CD4-positive, alpha-beta T cell (primary cell): ENCODE measurements at regions of chr6 and their contacts with region 1.

Region 1: DNA sequence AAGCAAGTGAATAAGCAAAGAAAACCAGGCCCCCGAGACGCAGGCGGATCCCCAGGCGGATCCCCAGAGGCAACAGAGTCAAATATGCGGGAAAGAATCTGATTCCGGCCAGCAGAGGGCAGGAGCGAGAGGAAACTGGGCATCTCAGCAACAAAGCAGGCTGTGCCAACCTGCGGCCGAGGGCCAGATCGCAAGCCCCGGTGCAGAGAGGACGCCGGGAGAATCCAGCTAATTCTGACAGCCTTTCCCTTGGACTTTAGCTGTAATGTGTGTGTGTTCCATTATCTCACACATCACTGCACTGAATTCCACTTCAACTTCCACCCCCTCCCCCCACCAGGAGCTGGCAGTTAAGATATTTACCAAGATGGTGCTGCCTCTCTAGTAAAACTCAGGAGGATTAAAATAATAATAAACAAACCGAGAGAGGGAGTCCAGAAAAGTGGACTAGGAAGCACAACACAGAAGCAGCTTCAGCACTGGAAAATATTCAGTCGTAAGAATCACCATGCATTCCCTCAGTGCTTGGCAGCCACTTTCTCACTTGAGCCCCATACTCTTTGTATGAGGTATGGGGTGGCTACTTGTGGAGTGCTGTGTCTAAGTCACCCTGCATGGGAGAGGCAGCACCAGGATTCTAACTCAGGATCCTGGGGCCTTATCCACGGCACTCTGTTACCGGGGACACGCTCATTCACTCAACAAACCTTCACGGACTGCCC is 66.2 kb upstream of the SNX9 start:
- DNase-seq: peak; percentile 68 to 90 (median 76)
- ATAC-seq: peak; percentile 31
- H3K4me3 ChIP-seq: no peak overlapping the region
- H3K4me3 Mint-ChIP-seq: peak overlapping the region; percentile 26
- H3K27ac ChIP-seq: no peak overlapping the region
- H3K27ac Mint-ChIP-seq: peak overlapping the region; percentile 87
- H3K4me1 ChIP-seq: peaks cover 49% of the 10 kb centered on the region
- H3K4me1 Mint-ChIP-seq: peaks cover 71% of the 10 kb centered on the region
- H3K27me3 ChIP-seq: no peaks in the 10 kb centered on the region
- H3K27me3 Mint-ChIP-seq: no peaks in the 10 kb centered on the region
- CTCF ChIP-seq: peak; percentile 92

Region 2: GRCh38 chr6:157774153-157775135 is 17.6 kb after region 1 on chr6:
- CTCF ChIA-PET with region 1: interaction called, 16 read pairs
- POLR2A ChIA-PET with region 1: interaction called, 3 read pairs
- intact Hi-C with region 1: no loop called
- DNase-seq: peak in 3 of 14 experiments; percentile 31 to 49 (median 42)
- ATAC-seq: no peak
- H3K4me3 ChIP-seq: no peak overlapping the region
- H3K4me3 Mint-ChIP-seq: peak overlapping the region; percentile 15
- H3K27ac ChIP-seq: no peak overlapping the region
- H3K27ac Mint-ChIP-seq: no peak overlapping the region
- H3K4me1 ChIP-seq: peaks cover 7% of the 10 kb centered on the region
- H3K4me1 Mint-ChIP-seq: peaks cover 13% of the 10 kb centered on the region
- H3K27me3 ChIP-seq: no peaks in the 10 kb centered on the region
- H3K27me3 Mint-ChIP-seq: no peaks in the 10 kb centered on the region
- CTCF ChIP-seq: no peak

Region 3: GRCh38 chr6:157873735-157874344 is 117.0 kb after region 1 on chr6:
- CTCF ChIA-PET with region 1: interaction called, 22 read pairs
- POLR2A ChIA-PET with region 1: interaction called, 23 read pairs
- intact Hi-C with region 1: loop called (anchors 1 kb)
- DNase-seq: peak; percentile 75 to 92 (median 84)
- ATAC-seq: peak; percentile 74
- H3K4me3 ChIP-seq: no peak overlapping the region
- H3K4me3 Mint-ChIP-seq: no peak overlapping the region
- H3K27ac ChIP-seq: no peak overlapping the region
- H3K27ac Mint-ChIP-seq: peak overlapping the region; percentile 47
- H3K4me1 ChIP-seq: peaks cover 15% of the 10 kb centered on the region
- H3K4me1 Mint-ChIP-seq: peaks cover 39% of the 10 kb centered on the region
- H3K27me3 ChIP-seq: no peaks in the 10 kb centered on the region
- H3K27me3 Mint-ChIP-seq: no peaks in the 10 kb centered on the region
- CTCF ChIP-seq: peak; percentile 92

Region 4: DNA sequence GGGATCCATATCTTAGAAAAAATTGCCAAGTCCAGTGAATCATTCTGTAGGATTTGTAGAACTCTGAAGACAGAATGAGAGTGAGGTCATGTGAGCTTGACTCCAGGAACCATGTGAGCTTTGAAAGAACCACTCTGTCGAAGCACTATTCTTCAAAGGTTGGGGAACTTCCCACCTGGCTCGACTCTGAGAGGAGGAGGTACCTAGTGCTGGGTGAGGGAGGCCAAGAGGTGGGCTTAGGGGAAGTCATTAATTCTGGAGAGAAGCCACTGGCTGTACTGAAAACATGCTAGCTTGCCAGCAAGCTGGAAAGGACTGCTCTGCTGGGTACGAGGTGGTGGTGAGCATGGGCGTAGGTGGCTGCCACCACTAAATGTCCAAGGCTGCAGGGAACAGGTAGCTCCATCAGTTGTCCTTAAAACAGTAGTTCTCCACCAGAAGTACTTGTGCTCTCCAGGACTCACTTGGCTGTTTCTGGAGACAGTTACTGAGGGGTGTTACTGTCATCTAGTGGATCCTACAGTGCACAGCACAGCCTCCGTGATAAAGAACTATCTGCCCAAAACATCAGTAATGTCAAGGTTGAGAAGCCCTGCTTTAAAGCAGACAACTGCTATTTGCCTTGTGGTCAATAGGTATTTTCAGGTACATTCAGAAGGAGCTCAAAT is 190.1 kb after region 1 on chr6:
- CTCF ChIA-PET with region 1: no interaction called
- POLR2A ChIA-PET with region 1: no interaction called
- intact Hi-C with region 1: loop called in 1 of 2 experiments (anchors 5 kb)
- DNase-seq: peak in 3 of 14 experiments; percentile 21 to 57 (median 54)
- ATAC-seq: peak; percentile 80
- H3K4me3 ChIP-seq: no peak overlapping the region
- H3K4me3 Mint-ChIP-seq: no peak overlapping the region
- H3K27ac ChIP-seq: no peak overlapping the region
- H3K27ac Mint-ChIP-seq: peak overlapping the region; percentile 21
- H3K4me1 ChIP-seq: no peaks in the 10 kb centered on the region
- H3K4me1 Mint-ChIP-seq: peaks cover 4% of the 10 kb centered on the region
- H3K27me3 ChIP-seq: no peaks in the 10 kb centered on the region
- H3K27me3 Mint-ChIP-seq: no peaks in the 10 kb centered on the region
- CTCF ChIP-seq: peak; percentile 36

Region 5: DNA sequence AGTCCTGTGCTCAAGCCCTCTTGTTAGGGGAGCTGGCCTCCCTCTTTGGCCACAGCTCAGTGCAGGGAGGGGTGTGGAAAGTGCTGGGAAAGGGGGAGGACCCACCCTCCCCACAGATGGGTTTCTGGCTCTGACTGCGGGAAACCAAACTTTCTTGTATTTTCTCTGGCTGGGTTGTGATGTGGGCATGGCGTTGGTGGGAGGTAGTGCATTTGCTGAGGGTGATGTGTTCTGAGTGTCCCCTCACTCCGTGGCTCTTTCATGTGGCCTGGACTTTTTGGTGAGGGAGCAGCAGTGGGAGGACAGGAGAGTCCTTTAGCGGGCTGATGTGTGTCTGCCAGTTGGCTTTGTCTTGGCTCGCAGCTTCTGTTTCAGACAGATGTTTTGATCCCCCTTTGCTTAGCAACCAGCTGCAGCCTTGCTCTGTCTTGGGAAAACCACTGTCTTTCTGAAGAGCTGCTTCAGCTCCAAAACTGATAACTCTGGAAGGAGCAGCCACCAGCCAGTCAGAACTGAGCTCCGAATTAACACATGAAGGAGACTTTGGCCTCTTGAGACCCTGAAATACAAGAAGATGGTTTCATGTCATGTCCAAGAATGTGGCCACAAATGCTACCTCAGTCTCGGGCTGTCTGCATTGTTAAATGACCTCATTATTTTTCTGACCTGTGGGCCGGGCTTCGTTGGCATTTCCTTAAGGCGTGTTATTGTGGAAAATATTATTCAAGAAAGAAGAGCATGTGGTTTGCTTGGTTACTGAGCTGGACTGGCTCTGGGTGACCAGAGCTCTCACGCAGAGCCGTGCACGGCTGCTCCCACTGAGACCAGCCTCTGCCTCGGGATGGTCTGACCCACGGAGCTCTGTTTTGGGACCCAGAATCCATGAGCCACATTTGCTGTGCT is 246.3 kb after region 1 on chr6:
- CTCF ChIA-PET with region 1: no interaction called
- POLR2A ChIA-PET with region 1: no interaction called
- intact Hi-C with region 1: no loop called
- DNase-seq: peak in 2 of 14 experiments; percentile 29 to 52
- ATAC-seq: peak; percentile 60
- H3K4me3 ChIP-seq: no peak overlapping the region
- H3K4me3 Mint-ChIP-seq: no peak overlapping the region
- H3K27ac ChIP-seq: no peak overlapping the region
- H3K27ac Mint-ChIP-seq: peak overlapping the region; percentile 77
- H3K4me1 ChIP-seq: peaks cover 37% of the 10 kb centered on the region
- H3K4me1 Mint-ChIP-seq: peaks cover 78% of the 10 kb centered on the region
- H3K27me3 ChIP-seq: no peaks in the 10 kb centered on the region
- H3K27me3 Mint-ChIP-seq: no peaks in the 10 kb centered on the region
- CTCF ChIP-seq: no peak